MCF 10A (cell line): ENCODE measurements at regions of chr6 and their contacts with region 1.

Region 1: DNA sequence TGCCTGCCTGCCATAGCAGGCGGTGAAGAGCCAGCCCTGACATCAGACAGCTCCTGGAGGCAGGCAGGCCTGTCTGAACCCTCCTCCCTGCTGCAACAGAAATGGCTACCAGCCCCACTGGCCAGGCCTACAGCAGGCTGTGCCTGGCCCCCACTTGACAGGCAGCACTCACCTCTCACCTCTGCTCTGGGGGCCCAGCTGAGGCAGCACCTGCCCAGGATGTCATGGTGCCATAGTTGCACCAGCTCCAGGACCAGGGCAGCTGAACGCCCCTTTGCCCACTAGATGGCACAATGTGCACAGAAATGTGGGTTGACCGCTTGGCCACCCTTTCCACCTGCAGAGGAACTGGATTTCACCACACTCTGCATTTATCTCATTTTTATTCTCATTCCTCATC is 30.6 kb downstream of the MRPL14 start:
- DNase-seq: peak; percentile 85
- H3K4me3 Mint-ChIP-seq: no peak overlapping the region
- H3K27ac Mint-ChIP-seq: no peak overlapping the region
- H3K4me1 Mint-ChIP-seq: peaks cover 13% of the 10 kb centered on the region
- H3K27me3 Mint-ChIP-seq: no peaks in the 10 kb centered on the region
- CTCF ChIP-seq: peak; percentile 85

Region 2: GRCh38 chr6:44111434-44112417 is 15.1 kb after region 1 on chr6:
- CTCF ChIA-PET with region 1: interaction called, 21 read pairs
- POLR2A ChIA-PET with region 1: interaction called, 3 read pairs
- intact Hi-C with region 1: no loop called
- DNase-seq: no peak
- H3K4me3 Mint-ChIP-seq: no peak overlapping the region
- H3K27ac Mint-ChIP-seq: peak overlapping the region; percentile 20
- H3K4me1 Mint-ChIP-seq: peaks cover 17% of the 10 kb centered on the region
- H3K27me3 Mint-ChIP-seq: no peaks in the 10 kb centered on the region
- CTCF ChIP-seq: no peak

Region 3: DNA sequence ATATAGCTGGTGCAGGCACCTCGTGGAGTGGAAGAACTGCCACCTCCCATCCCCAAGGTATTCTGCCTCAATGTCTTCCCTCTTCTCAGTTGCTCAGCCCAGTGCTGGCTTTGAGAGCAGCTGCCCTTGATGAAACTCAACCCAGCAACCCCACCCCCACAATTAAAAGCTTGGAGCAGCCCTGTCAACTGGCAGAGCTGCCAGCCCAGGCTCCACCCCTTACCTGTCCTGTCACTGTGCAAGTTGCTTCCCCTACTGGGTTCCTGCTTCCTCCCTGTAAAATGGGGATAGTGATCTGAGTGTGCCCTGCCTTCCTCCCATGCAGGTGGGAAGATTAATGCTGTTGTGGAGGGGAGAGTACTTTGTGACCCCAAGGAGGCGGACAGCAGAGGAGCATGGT is 35.3 kb after region 1 on chr6:
- CTCF ChIA-PET with region 1: interaction called, 10 read pairs
- POLR2A ChIA-PET with region 1: no interaction called
- intact Hi-C with region 1: no loop called
- DNase-seq: no peak
- H3K4me3 Mint-ChIP-seq: no peak overlapping the region
- H3K27ac Mint-ChIP-seq: no peak overlapping the region
- H3K4me1 Mint-ChIP-seq: peaks cover 22% of the 10 kb centered on the region
- H3K27me3 Mint-ChIP-seq: no peaks in the 10 kb centered on the region
- CTCF ChIP-seq: no peak

Region 4: GRCh38 chr6:44151348-44152108 is 54.9 kb after region 1 on chr6:
- CTCF ChIA-PET with region 1: interaction called, 10 read pairs
- POLR2A ChIA-PET with region 1: interaction called, 4 read pairs
- intact Hi-C with region 1: loop called (anchors 1 kb)
- DNase-seq: peak; percentile 61
- H3K4me3 Mint-ChIP-seq: no peak overlapping the region
- H3K27ac Mint-ChIP-seq: no peak overlapping the region
- H3K4me1 Mint-ChIP-seq: no peaks in the 10 kb centered on the region
- H3K27me3 Mint-ChIP-seq: no peaks in the 10 kb centered on the region
- CTCF ChIP-seq: peak; percentile 98

Region 5: GRCh38 chr6:44237813-44238433 is 141.3 kb after region 1 on chr6:
- CTCF ChIA-PET with region 1: interaction called, 7 read pairs
- POLR2A ChIA-PET with region 1: no interaction called
- intact Hi-C with region 1: loop called (anchors 1 kb)
- DNase-seq: peak; percentile 69
- H3K4me3 Mint-ChIP-seq: peak overlapping the region; percentile 86
- H3K27ac Mint-ChIP-seq: peak overlapping the region; percentile 85
- H3K4me1 Mint-ChIP-seq: peaks cover 22% of the 10 kb centered on the region
- H3K27me3 Mint-ChIP-seq: no peaks in the 10 kb centered on the region
- CTCF ChIP-seq: peak; percentile 94

Region 6: DNA sequence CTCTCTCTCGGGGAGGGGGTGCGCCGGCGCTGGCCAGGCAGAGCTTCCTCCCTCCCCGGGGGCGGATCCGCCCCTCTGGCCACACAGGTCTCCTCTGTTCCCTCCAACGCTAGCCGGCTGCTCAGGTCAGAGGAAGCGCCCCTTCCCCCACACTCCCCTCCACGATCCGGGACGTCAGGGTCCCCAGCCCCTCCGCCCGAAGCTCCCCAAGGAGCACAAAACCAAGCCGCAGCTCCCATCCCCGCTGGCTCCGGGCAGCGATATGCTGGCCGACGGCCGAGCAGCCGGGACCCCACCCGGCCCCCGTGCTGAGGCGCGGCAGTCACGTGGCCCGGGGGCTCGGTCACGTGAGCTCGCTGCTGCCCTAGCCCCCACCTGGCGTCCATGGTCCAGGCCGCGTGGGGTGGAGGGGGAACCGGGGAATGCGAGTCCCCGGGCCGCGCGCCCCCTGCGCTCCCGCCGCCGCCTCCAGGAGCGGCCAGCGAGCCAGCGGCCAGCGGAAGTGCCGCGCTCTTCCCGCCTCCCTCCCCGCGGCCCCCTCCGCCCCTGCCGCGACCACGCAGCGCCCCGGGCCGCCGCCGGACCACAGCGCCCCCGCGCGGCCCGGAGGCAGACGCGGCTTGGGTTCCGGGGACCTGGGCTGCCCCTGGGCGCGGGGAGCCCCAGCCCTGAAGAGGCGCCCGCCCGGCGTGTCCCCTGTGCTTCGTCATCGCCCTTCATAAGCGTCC is 160.6 kb after region 1 on chr6 and contains the start of gene SLC35B2:
- CTCF ChIA-PET with region 1: interaction called, 7 read pairs
- POLR2A ChIA-PET with region 1: no interaction called
- intact Hi-C with region 1: loop called (anchors 1 kb)
- DNase-seq: peak; percentile 47
- H3K4me3 Mint-ChIP-seq: peak within 1 kb of the TSS; percentile 84
- H3K27ac Mint-ChIP-seq: peak within 1 kb of the TSS; percentile 57
- H3K4me1 Mint-ChIP-seq: peaks cover 50% of the 10 kb centered on the region
- H3K27me3 Mint-ChIP-seq: no peaks in the 10 kb centered on the region
- CTCF ChIP-seq: peak; percentile 78
- total RNA-seq, gene SLC35B2: 27.1 and 31.3 TPM in 2 replicates

Region 7: DNA sequence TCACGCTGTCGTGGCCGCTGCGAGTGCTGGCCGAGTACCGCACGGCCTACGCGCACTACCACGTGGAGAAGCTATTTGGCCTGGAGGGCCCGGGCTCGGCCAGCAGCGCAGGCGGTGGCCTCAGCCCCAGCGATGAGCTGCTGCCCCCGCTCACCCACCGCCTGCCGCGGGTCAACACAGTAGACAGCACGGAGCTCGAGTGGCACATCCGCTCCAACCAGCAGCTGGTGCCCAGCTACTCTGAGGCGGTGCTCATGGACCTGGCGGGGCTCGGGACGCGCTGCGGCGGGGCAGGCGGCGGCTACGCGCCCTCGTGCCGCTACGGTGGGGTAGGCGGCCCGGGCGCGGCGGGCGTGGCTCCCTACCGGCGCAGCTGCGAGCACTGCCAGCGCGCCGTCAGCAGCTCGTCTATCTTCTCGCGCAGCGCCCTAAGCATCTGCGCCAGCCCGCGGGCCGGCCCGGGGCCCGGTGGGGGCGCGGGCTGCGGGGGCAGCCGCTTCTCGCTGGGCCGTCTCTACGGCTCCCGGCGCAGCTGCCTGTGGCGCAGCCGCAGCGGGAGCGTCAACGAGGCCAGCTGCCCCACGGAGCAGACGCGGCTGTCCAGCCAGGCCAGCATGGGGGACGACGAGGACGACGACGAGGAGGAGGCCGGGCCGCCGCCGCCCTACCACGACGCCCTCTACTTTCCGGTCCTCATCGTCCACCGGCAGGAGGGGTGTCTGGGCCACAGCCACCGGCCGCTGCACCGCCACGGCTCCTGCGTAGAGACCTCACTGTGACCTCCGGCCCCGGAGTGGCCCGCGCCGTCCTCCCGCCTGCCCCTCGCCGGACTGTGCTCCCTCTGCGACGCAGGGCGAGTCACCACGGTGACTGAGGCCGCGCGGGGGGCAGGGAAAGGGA is 179.4 kb after region 1 on chr6:
- CTCF ChIA-PET with region 1: no interaction called
- POLR2A ChIA-PET with region 1: no interaction called
- intact Hi-C with region 1: no loop called
- DNase-seq: no peak
- H3K4me3 Mint-ChIP-seq: no peak overlapping the region
- H3K27ac Mint-ChIP-seq: no peak overlapping the region
- H3K4me1 Mint-ChIP-seq: no peaks in the 10 kb centered on the region
- H3K27me3 Mint-ChIP-seq: peaks cover 51% of the 10 kb centered on the region
- CTCF ChIP-seq: no peak